H1 (cell line): ENCODE measurements at regions of chr4 and their contacts with region 1.

Region 1: GRCh38 chr4:26105815-26106699 is 192.0 kb downstream of the SMIM20 start:
- DNase-seq: no peak
- H3K4me3 ChIP-seq: no peak overlapping the region
- H3K27ac ChIP-seq: no peak overlapping the region
- H3K4me1 ChIP-seq: no peaks in the 10 kb centered on the region
- H3K27me3 ChIP-seq: no peaks in the 10 kb centered on the region
- CTCF ChIP-seq: no peak
- EP300 ChIP-seq: no peak
- POLR2A ChIP-seq: no peak
- RAD21 ChIP-seq: no peak

Region 2: DNA sequence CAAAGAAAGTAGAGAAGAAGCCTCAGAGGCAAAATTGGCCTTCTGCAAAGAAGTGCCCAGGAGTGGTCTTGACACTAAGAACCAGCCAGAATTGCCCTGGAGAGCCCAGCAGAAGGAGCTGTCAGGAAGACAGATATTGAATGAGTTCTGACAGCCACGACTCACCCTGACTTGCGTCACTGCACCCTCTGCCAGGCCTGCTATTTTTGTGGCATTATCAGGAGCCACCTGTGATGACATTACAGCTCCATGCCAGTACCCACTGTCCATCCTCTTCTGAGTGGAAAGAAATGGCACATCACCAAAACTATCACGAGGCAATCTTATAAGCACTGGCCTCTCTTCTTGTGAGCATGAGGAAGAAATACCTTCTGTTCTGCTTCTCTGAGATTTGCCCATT is 124.3 kb before region 1 on chr4:
- CTCF ChIA-PET with region 1: no interaction called
- POLR2A ChIA-PET with region 1: no interaction called
- DNase-seq: no peak
- H3K4me3 ChIP-seq: no peak overlapping the region
- H3K27ac ChIP-seq: no peak overlapping the region
- H3K4me1 ChIP-seq: peaks cover 0 to 8% (median 2%) of the 10 kb centered on the region in 4 experiments; a peak in 5 of 7 replicates
- H3K27me3 ChIP-seq: no peaks in the 10 kb centered on the region
- CTCF ChIP-seq: no peak
- EP300 ChIP-seq: no peak
- POLR2A ChIP-seq: no peak
- RAD21 ChIP-seq: no peak

Region 3: DNA sequence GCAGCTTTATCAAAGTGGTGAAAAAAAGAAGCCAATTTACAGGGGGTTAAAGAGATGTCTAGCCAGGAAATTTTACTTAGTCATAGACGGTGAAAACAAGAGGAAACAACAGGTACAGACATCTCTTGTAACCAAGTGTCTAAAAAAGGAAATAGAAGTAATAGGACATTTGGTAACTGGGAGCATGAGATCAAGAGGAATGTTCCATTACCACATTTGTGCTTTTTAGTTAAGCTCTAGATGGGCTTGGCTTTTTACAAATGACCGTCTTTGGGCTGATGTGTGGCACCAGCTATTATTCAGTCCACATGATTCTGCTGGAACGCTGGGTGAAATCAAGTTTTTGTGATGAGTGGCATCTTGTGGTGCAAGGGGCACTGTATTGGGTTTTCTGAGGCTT is 12.5 kb before region 1 on chr4:
- CTCF ChIA-PET with region 1: interaction called, 11 read pairs
- POLR2A ChIA-PET with region 1: no interaction called
- DNase-seq: no peak
- H3K4me3 ChIP-seq: no peak overlapping the region
- H3K27ac ChIP-seq: no peak overlapping the region
- H3K4me1 ChIP-seq: no peaks in the 10 kb centered on the region
- H3K27me3 ChIP-seq: no peaks in the 10 kb centered on the region
- CTCF ChIP-seq: no peak
- EP300 ChIP-seq: no peak
- POLR2A ChIP-seq: no peak
- RAD21 ChIP-seq: no peak

Region 4: DNA sequence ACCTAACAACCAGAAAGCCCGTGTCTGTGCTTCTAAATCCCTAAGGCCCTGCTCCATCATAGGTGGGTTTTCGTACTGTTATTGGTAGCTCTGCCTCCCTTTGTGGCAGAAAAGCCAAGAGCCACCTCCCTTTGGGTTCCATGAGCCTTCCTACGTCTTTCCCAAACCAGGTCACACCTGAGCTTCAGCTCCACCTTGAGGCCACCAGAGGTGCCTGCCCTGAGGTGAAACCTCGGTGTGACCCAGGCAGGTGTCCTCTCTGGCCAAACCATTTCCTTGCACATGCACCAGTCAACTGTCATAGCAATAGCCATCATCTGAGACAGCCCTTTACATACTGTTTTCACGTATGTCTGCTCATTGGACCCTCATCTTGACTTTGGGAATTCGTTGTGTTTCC is 26.8 kb after region 1 on chr4:
- CTCF ChIA-PET with region 1: interaction called, 17 read pairs
- POLR2A ChIA-PET with region 1: no interaction called
- DNase-seq: no peak
- H3K4me3 ChIP-seq: no peak overlapping the region
- H3K27ac ChIP-seq: no peak overlapping the region
- H3K4me1 ChIP-seq: no peaks in the 10 kb centered on the region
- H3K27me3 ChIP-seq: no peaks in the 10 kb centered on the region
- CTCF ChIP-seq: peak; percentile 55 to 69 (median 64)
- EP300 ChIP-seq: no peak
- POLR2A ChIP-seq: no peak
- RAD21 ChIP-seq: peak; percentile 58 to 67